IMR-90 (cell line): ENCODE measurements at regions of chr22 and their contacts with region 1.

Region 1: GRCh38 chr22:42511401-42511891 is 8.2 kb downstream of the RRP7A start:
- DNase-seq: no peak
- ATAC-seq: no peak
- H3K4me3 ChIP-seq: no peak overlapping the region
- H3K27ac ChIP-seq: no peak overlapping the region
- H3K4me1 ChIP-seq: no peaks in the 10 kb centered on the region
- H3K27me3 ChIP-seq: no peaks in the 10 kb centered on the region
- CTCF ChIP-seq: no peak
- POLR2A ChIP-seq: no peak
- RAD21 ChIP-seq: no peak

Region 2: GRCh38 chr22:42396621-42397331 is 114.7 kb before region 1 on chr22:
- CTCF ChIA-PET with region 1: no interaction called
- POLR2A ChIA-PET with region 1: no interaction called
- dilution Hi-C with region 1: no loop called
- in situ Hi-C with region 1: no loop called
- intact Hi-C with region 1: no loop called
- DNase-seq: no peak
- ATAC-seq: no peak
- H3K4me3 ChIP-seq: no peak overlapping the region
- H3K27ac ChIP-seq: no peak overlapping the region
- H3K4me1 ChIP-seq: no peaks in the 10 kb centered on the region
- H3K27me3 ChIP-seq: peaks cover 37% of the 10 kb centered on the region
- CTCF ChIP-seq: no peak
- POLR2A ChIP-seq: no peak
- RAD21 ChIP-seq: no peak

Region 3: GRCh38 chr22:42528258-42528948 is 17.0 kb after region 1 on chr22:
- CTCF ChIA-PET with region 1: no interaction called
- POLR2A ChIA-PET with region 1: interaction called, 13 read pairs
- dilution Hi-C with region 1: no loop called
- in situ Hi-C with region 1: no loop called
- intact Hi-C with region 1: no loop called
- DNase-seq: no peak
- ATAC-seq: no peak
- H3K4me3 ChIP-seq: no peak overlapping the region
- H3K27ac ChIP-seq: no peak overlapping the region
- H3K4me1 ChIP-seq: no peaks in the 10 kb centered on the region
- H3K27me3 ChIP-seq: peaks cover 8% of the 10 kb centered on the region
- CTCF ChIP-seq: no peak
- POLR2A ChIP-seq: no peak
- RAD21 ChIP-seq: no peak